Panc1 (cell line): ENCODE measurements at regions of chr21 and their contacts with region 1.

Region 1: GRCh38 chr21:29351691-29352090 is 53.0 kb downstream of the BACH1 start:
- DNase-seq: no peak
- ATAC-seq: no peak
- H3K4me3 ChIP-seq: no peak overlapping the region
- H3K27ac ChIP-seq: no peak overlapping the region
- H3K4me1 ChIP-seq: no peaks in the 10 kb centered on the region
- H3K27me3 ChIP-seq: no peaks in the 10 kb centered on the region
- CTCF ChIP-seq: no peak

Region 2: DNA sequence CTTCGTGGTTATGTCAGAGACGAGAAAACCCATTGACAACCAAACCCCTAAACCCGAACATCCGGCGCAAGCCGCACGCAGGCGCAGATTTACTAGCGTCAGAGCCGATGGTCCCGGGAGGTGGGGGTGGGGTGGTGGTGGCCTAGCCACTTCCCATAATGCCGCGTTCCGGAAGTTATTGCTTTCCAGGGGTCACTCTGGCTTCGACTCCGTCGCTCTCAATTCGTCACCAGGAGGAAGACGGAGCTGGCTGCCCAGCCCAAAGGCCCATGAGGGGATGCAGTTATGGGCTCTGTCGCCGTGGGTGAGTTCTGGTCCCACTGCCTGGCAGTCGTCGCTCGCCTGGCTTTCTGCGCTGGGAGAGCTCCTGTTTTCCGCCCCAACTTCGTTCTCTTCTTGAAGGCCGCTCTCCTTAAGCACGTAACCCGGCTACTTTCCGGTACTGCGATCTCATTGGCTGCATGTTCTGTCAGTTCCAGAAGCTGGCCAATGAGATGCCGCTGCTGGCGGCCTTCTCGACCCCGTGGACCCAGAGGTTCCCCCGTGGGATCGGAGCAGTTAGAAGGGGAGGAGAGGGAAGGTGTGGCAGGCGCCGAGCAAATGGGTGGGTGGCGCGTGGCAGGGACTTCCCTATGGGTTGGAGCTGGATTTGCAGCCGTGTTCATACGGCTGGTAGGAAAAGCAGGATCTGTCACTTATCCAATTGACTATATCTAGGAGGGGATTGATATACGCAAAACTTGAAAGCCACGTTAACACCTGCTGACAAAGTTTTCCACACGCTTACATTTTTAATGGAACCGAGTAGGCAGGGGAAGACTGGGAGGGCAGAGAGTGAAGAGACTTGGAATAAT is 327.0 kb before region 1 on chr21 and contains the start of gene USP16:
- CTCF ChIA-PET with region 1: no interaction called
- POLR2A ChIA-PET with region 1: no interaction called
- in situ Hi-C with region 1: no loop called
- intact Hi-C with region 1: no loop called
- DNase-seq: peak; percentile 93
- ATAC-seq: peak; percentile 99
- H3K4me3 ChIP-seq: peak within 1 kb of the TSS; percentile 92 to 97
- H3K27ac ChIP-seq: peak within 1 kb of the TSS; percentile 92
- H3K4me1 ChIP-seq: no peaks in the 10 kb centered on the region; the same call in 1 of the 2 replicates
- H3K27me3 ChIP-seq: no peaks in the 10 kb centered on the region
- CTCF ChIP-seq: no peak
- total RNA-seq, gene USP16: 26.6 TPM

Region 3: GRCh38 chr21:29073222-29074006 is 278.3 kb before region 1 on chr21 and contains the start of gene CCT8:
- CTCF ChIA-PET with region 1: no interaction called
- POLR2A ChIA-PET with region 1: no interaction called
- in situ Hi-C with region 1: no loop called
- intact Hi-C with region 1: loop called (anchors 5 kb)
- DNase-seq: peak; percentile 91
- ATAC-seq: peak; percentile 97
- H3K4me3 ChIP-seq: peak within 1 kb of the TSS; percentile 96 to 98
- H3K27ac ChIP-seq: peak within 1 kb of the TSS; percentile 95
- H3K4me1 ChIP-seq: peaks cover 10% of the 10 kb centered on the region
- H3K27me3 ChIP-seq: no peaks in the 10 kb centered on the region
- CTCF ChIP-seq: no peak
- total RNA-seq, gene CCT8: 160 TPM

Region 4: DNA sequence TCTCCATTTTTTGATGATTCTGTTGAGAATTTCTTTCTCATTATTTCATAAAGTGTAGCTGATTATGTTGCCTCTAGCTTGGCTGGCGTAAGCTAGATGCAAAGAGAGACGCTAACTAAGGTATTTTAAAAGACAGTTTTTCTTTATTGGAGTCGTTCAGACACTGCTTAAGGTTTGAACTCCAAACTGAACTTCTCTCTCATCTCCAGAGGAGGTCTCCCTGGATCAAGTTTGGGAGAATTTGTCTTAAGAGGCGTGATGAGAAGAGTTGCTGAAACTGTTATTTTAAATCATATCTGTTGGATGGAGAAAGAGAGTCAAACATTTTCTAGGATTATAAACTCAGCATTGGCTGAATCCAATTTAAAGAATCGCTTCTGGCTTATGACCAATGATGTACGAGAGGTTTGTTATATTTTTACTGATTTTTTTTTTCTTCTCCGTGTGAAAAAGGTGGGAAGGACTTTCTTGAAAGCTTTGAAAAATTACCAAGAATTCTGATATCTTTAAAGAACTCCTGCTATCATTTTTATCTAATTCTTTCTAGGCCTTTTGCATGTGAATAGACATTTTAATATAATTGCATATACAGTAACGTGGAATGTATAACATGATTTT is 187.3 kb before region 1 on chr21:
- CTCF ChIA-PET with region 1: interaction called, 4 read pairs
- POLR2A ChIA-PET with region 1: no interaction called
- in situ Hi-C with region 1: no loop called
- intact Hi-C with region 1: loop called (anchors 5 kb)
- DNase-seq: no peak
- ATAC-seq: peak; percentile 74
- H3K4me3 ChIP-seq: no peak overlapping the region
- H3K27ac ChIP-seq: no peak overlapping the region
- H3K4me1 ChIP-seq: no peaks in the 10 kb centered on the region
- H3K27me3 ChIP-seq: no peaks in the 10 kb centered on the region
- CTCF ChIP-seq: peak; percentile 70; the same call in 1 of the 2 replicates

Region 5: GRCh38 chr21:29318354-29318753 is 33.3 kb before region 1 on chr21:
- CTCF ChIA-PET with region 1: no interaction called
- POLR2A ChIA-PET with region 1: no interaction called
- in situ Hi-C with region 1: no loop called
- intact Hi-C with region 1: no loop called
- DNase-seq: no peak
- ATAC-seq: no peak
- H3K4me3 ChIP-seq: no peak overlapping the region
- H3K27ac ChIP-seq: no peak overlapping the region
- H3K4me1 ChIP-seq: no peaks in the 10 kb centered on the region
- H3K27me3 ChIP-seq: no peaks in the 10 kb centered on the region
- CTCF ChIP-seq: no peak